Esophagus muscularis mucosa (tissue), 4 donors: ENCODE measurements at regions of chr2 and their contacts with region 1.

Region 1: DNA sequence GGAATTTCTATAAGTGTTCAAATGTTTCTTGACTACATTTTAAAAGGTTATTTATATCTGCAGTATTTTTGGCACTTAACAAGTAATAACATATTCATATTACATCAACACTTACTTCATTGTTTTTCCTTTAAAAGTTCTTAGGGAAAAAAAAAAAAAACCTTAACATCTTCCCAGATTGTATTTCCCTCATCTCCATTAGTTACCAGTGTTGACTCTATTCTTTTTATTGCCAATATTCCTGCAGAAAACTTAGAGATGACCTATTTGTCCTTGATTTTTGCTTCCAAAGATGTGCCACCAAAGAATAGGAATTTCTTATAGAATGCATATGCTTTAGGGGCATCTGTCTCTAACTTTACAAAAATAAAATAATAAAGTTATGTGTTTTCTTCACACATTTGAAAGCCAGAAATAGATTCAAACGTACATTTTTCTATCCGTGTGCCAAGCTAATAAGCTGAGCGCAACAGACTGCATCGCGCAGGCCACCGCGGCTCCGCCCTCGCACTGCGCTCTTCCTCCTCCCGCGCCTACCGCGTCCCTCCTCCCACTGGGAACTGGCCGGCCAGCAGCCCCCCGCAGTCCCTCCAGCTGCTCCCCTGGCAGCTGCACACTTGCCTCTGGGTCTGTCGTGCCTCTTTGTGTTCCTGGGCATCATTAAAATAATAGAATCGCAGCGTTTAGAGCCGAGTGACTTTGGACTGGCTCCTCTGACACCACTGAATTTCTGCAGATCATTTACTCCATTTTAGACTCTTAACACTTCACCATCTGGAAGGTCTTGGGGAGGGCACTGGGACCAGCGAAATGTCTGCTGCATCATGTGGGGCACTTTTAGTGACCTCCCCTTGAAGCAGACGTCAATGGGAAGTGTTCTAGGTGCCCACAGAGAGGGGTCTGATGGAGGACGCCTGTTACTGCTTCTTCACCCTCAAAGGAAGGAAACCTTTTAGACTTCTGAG is 21.2 kb upstream of the NAB1 start:
- DNase-seq: no peak
- H3K4me3 ChIP-seq: peak overlapping the region; percentile 52 to 67 (median 56)
- H3K27ac ChIP-seq: peak overlapping the region; percentile 79 to 84 (median 81)
- H3K4me1 ChIP-seq: peaks cover 11 to 33% (median 21%) of the 10 kb centered on the region in 4 donors
- H3K27me3 ChIP-seq: no peaks in the 10 kb centered on the region
- CTCF ChIP-seq: no peak
- EP300 ChIP-seq: no peak
- POLR2A ChIP-seq: no peak

Region 2: DNA sequence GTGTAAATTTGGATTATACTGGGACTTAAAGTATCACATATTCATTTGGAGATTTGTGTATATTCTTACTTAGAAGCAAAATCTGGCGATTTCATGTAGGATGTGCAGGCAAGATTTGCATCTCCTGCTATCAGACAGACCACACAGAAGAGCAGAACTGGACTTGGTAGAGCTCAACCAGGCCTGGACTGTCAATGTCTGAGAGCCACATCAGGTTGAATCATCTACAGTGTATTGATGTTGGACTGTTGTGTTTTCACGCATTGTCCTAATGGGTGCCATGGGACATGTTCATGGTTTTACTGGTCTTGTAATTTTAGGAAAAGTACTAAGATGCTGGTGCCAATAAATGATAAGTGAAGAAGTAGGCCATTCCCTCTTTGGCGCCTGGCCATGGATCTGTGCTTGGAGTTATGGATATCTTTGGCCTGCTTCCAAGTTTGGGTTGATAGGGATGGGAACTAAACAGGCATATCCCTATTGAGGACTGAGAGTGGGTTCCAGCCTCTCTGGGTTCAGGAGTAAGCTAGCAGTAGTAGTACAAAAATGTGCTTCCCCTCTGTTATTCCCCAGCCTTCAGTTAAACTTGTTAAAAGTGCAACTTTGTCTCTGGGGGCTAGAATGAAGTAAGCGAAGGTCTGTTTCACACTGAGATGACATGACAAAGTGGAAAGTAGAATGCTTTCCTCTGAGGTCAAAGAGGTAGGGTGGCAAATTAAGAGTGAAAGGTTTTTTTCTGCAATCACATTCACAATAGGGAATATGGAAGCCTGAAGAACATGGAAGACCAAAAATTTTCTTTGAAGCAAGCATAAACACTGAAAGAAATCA is 44.0 kb before region 1 on chr2:
- intact Hi-C with region 1: loop called (anchors 5 kb)
- DNase-seq: peak; percentile 74
- H3K4me3 ChIP-seq: no peak overlapping the region
- H3K27ac ChIP-seq: peak overlapping the region in 2 of 4 donors; percentile 50 to 61
- H3K4me1 ChIP-seq: peaks cover 18 to 24% (median 22%) of the 10 kb centered on the region in 4 donors
- H3K27me3 ChIP-seq: no peaks in the 10 kb centered on the region
- CTCF ChIP-seq: no peak
- EP300 ChIP-seq: no peak
- POLR2A ChIP-seq: no peak